Spleen (tissue), 13 donors: ENCODE measurements at regions of chr11 and their contacts with region 1.

Region 1: GRCh38 chr11:12963792-12964536 is 45.2 kb upstream of the RASSF10 start:
- DNase-seq: no peak
- H3K4me3 ChIP-seq: no peak overlapping the region
- H3K27ac ChIP-seq: no peak overlapping the region
- H3K4me1 ChIP-seq: peaks cover 0 to 5% (median 0%) of the 10 kb centered on the region in 6 donors
- H3K27me3 ChIP-seq: peaks cover 0 to 28% (median 0%) of the 10 kb centered on the region in 7 donors
- CTCF ChIP-seq: peak in 10 of 11 experiments; percentile 54 to 86 (median 76)
- POLR2A ChIP-seq: no peak

Region 2: GRCh38 chr11:13183094-13183825 is 219.3 kb after region 1 on chr11:
- intact Hi-C with region 1: loop called (anchors 10 kb)
- DNase-seq: no peak
- H3K4me3 ChIP-seq: peak overlapping the region in 1 of 8 donors; percentile 37
- H3K27ac ChIP-seq: no peak overlapping the region
- H3K4me1 ChIP-seq: peaks cover 0 to 8% (median 6%) of the 10 kb centered on the region in 6 donors
- H3K27me3 ChIP-seq: no peaks in the 10 kb centered on the region
- CTCF ChIP-seq: peak in 8 of 11 experiments; percentile 8 to 37 (median 31)
- POLR2A ChIP-seq: no peak

Region 3: GRCh38 chr11:13343931-13344717 is 380.2 kb after region 1 on chr11:
- intact Hi-C with region 1: loop called (anchors 10 kb)
- DNase-seq: no peak
- H3K4me3 ChIP-seq: no peak overlapping the region
- H3K27ac ChIP-seq: no peak overlapping the region
- H3K4me1 ChIP-seq: peaks cover 0 to 86% (median 27%) of the 10 kb centered on the region in 6 donors
- H3K27me3 ChIP-seq: no peaks in the 10 kb centered on the region
- CTCF ChIP-seq: peak; percentile 57 to 85 (median 74)
- POLR2A ChIP-seq: no peak